Activated B cell treated with CpG ODN at 0.5 μM for 24 hours (primary cell): ENCODE measurements at regions of chr17 and their contacts with region 1.

Region 1: DNA sequence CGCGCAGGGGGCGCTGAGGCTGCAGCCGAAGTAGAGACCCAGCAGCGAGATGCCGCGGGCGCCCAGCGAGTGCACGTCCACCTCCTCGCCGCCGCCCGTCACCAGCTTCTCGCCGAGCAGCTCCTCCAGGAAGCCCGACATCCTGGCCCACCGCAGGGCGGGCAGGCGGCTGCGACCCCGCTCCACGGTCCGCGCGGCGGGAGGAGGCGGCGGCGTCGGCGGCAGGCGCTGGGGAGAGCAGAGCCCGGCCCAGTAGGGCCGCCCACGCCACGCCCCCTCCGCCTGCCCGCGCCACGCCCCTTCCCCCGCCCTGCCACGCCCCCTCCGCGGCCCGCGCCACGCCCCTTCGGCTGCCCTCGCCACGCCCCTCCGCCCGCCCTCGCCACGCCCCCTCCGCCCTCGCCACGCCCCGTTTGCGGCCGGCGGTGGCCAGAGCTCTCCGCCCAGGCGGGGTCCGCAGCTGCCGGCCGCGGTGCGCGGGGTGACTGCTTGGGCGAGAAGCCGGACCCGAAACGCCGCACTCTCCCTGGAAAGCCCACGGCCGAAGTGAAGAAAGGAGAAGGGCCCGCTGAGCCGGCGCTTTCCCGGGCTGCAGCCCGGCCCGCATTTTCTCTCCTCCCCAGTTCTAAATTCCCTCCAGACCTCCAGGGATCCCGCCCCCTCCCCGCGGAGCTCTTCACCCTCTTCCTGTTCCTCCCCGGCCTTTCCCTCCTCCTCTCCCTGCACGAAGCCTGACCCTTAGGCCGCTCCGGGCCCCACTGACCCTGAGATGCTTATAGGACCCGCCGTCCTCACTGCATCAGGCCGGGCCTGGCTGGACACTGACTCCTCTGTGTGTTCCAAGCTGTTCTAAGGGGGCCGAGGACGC is at the start of gene NXN:
- DNase-seq: peak; percentile 93
- ATAC-seq: peak; percentile 87
- H3K4me3 Mint-ChIP-seq: peak within 1 kb of the TSS; percentile 83
- H3K27ac Mint-ChIP-seq: peak within 1 kb of the TSS; percentile 61
- H3K4me1 Mint-ChIP-seq: peaks cover 19% of the 10 kb centered on the region
- H3K27me3 Mint-ChIP-seq: peaks cover 25% of the 10 kb centered on the region
- CTCF ChIP-seq: no peak
- total RNA-seq, gene NXN: 0.15 and 0.22 TPM in 2 replicates

Region 2: DNA sequence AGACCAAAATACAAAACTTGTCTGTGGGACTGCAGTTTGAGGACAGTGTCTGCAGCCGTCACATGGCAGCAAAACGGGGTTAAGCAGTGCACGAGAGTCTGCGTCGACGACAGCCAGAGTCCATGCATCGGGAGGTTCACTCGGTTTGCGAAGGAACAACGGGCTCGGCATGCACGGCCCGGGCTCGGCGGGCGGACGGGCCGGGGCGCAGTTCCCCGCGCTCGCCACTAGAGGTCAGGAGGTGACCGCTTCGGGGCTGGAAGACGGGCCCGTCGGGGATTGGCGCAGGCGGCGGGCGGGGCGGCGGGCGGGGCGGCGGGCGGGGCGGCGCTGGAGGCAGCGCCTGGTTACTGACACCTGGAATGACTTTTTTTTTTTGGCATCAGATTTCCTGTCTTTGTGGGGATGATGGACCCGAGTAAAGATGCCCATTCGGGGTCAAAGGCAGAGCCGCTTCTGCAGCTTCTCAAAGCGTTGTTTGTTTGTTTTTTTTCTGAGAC is 835.9 kb before region 1 on chr17:
- CTCF ChIA-PET with region 1: interaction called, 4 read pairs
- POLR2A ChIA-PET with region 1: no interaction called
- intact Hi-C with region 1: loop called (anchors 2 kb)
- DNase-seq: peak; percentile 82
- ATAC-seq: peak; percentile 98
- H3K4me3 Mint-ChIP-seq: no peak overlapping the region
- H3K27ac Mint-ChIP-seq: no peak overlapping the region
- H3K4me1 Mint-ChIP-seq: peaks cover 4% of the 10 kb centered on the region
- H3K27me3 Mint-ChIP-seq: peaks cover 3% of the 10 kb centered on the region
- CTCF ChIP-seq: peak; percentile 42

Region 3: GRCh38 chr17:409848-410545 is 569.8 kb before region 1 on chr17:
- CTCF ChIA-PET with region 1: interaction called, 19 read pairs
- POLR2A ChIA-PET with region 1: interaction called, 4 read pairs
- intact Hi-C with region 1: loop called (anchors 1 kb)
- DNase-seq: peak; percentile 99
- ATAC-seq: peak; percentile 84
- H3K4me3 Mint-ChIP-seq: peak overlapping the region; percentile 88
- H3K27ac Mint-ChIP-seq: peak overlapping the region; percentile 91
- H3K4me1 Mint-ChIP-seq: peaks cover 47% of the 10 kb centered on the region
- H3K27me3 Mint-ChIP-seq: no peaks in the 10 kb centered on the region
- CTCF ChIP-seq: no peak

Region 4: GRCh38 chr17:781805-782731 is 197.7 kb before region 1 on chr17 and contains the starts of genes GLOD4 and MRM3:
- CTCF ChIA-PET with region 1: interaction called, 4 read pairs
- POLR2A ChIA-PET with region 1: interaction called, 4 read pairs
- intact Hi-C with region 1: loop called (anchors 1 kb)
- DNase-seq: peak; percentile 99
- ATAC-seq: peak; percentile 96
- H3K4me3 Mint-ChIP-seq: peak within 1 kb of the TSS; percentile 98
- H3K27ac Mint-ChIP-seq: peak within 1 kb of the TSS; percentile 94
- H3K4me1 Mint-ChIP-seq: peaks cover 38% of the 10 kb centered on the region
- H3K27me3 Mint-ChIP-seq: no peaks in the 10 kb centered on the region
- CTCF ChIP-seq: no peak
- total RNA-seq, gene GLOD4: 51.4 and 51.9 TPM in 2 replicates
- total RNA-seq, gene MRM3: 23.3 and 26.3 TPM in 2 replicates

Region 5: DNA sequence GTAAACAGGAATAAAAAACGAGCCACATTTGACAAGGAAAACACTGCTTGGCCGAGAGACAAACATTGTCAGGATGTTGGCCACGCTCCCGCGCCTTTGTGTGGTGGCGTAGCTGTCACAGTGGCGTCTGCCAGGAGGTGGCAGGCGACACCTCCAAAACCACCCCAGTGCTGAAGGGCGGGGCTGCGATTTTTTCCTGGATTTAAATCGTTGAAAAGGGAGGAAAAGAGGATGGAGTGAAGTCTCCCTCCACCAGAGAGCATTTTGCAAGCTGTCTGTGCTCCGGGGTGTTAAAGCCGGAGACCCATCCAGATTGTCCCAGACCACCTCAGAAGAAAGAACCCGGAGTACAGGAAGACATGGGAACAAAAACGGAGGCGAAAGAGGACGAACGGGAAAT is 184.9 kb before region 1 on chr17:
- CTCF ChIA-PET with region 1: interaction called, 12 read pairs
- POLR2A ChIA-PET with region 1: interaction called, 3 read pairs
- intact Hi-C with region 1: loop called (anchors 1 kb)
- DNase-seq: no peak
- ATAC-seq: peak; percentile 58
- H3K4me3 Mint-ChIP-seq: no peak overlapping the region
- H3K27ac Mint-ChIP-seq: no peak overlapping the region
- H3K4me1 Mint-ChIP-seq: peaks cover 7% of the 10 kb centered on the region
- H3K27me3 Mint-ChIP-seq: no peaks in the 10 kb centered on the region
- CTCF ChIP-seq: no peak

Region 6: DNA sequence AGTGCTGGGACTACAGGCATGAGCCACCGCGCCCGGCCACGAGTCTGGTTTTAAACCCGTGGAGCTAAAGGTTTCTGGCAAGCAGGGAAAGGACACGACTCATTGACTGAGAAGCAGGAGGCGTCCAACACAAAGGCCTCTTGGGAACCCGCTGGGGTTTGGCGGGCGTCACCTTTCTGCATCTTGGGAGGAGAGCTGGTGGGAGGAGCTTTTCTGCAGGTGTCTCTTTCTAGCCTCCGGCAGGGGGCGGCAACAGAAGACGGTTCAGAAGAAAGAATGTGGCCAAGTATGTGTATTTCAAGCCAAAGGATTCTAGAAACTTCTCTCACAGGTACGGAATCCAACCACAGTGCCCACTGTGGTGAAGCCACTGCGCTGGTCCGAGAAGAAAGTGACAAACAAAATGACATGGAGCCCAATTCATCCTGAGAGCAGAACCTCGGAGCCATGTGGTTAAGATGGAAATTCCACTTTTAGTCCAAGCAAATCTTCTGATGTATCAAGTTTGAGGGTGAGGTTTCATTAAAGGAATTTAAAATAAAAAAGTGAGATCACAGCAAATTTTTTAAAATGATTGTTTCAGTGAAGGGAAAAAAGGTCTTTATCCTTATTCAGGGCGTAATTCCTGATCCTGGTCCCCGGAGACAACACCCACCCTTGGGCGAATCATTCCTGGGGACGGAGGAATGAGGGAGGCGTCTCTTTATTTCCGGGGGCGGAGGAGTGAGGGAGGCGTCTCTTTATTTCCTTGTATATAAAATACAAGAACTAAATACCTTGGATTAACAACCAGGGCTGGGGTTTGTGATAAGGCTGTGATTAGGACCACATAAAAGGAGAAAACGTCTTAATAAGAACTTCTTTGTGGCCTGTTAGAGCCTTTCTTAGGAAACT is 100.0 kb before region 1 on chr17:
- CTCF ChIA-PET with region 1: interaction called, 23 read pairs
- POLR2A ChIA-PET with region 1: interaction called, 5 read pairs
- intact Hi-C with region 1: loop called (anchors 1 kb)
- DNase-seq: peak; percentile 30
- ATAC-seq: peak; percentile 58
- H3K4me3 Mint-ChIP-seq: no peak overlapping the region
- H3K27ac Mint-ChIP-seq: no peak overlapping the region
- H3K4me1 Mint-ChIP-seq: peaks cover 7% of the 10 kb centered on the region
- H3K27me3 Mint-ChIP-seq: peaks cover 20% of the 10 kb centered on the region
- CTCF ChIP-seq: no peak